ENCODE measurements at regions of chr16 and their contacts with region 1.

Region 1: DNA sequence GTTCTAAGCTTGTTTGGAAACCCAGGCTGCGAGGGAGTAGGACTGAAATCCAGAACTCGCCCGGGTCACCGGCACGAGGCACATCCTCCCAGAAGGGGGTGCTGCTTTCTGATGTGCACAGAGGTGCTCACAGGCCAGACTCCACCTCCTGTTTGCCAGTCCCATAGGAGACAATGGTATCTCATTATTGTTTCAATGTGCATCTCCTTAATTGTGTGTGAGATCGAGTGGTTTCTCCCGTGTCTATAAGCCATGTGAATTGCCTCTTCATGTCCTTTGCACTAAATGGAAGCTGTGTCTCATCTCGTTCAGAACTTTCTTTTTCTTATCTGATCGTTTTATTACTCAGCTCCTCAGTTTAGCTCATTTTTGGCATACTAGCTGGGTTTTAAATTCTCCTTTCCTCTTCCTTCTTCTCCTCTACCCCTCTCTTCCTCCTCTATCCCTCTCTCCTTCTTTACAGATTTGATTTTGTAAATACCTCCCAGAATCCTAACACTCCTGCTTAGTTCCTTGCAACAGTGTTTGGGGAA is 32.1 kb upstream of the PRKCB start:
- DNase-seq: peak; percentile 85
- ATAC-seq: peak; percentile 98
- H3K4me3 Mint-ChIP-seq: no peak overlapping the region
- H3K27ac Mint-ChIP-seq: no peak overlapping the region
- H3K4me1 Mint-ChIP-seq: peaks cover 25% of the 10 kb centered on the region
- H3K27me3 Mint-ChIP-seq: peaks cover 2% of the 10 kb centered on the region

Region 2: DNA sequence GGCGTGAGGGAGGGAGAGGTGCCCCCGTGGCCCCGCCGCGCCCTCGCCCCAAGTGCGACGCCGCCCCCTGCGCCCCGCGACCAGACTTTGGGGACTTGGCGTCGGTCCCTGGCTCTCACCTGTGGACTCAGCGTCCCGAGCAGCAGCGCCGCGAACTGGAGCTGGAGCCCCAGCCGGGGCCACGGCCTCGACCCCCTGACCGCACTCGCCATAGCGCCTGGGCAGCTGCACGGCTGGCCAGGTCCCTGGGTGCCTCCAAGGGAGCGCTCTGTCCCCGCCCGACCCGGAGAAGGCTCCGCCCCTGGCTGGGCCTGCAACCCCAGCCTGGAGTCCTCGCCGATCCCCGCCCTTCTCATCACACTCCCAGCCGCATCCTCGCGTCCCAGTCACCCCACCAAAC is 90.7 kb before region 1 on chr16 and contains the start of gene ERN2:
- CTCF ChIA-PET with region 1: no interaction called
- POLR2A ChIA-PET with region 1: no interaction called
- DNase-seq: no peak
- ATAC-seq: no peak
- H3K4me3 Mint-ChIP-seq: no peak within 1 kb of the TSS
- H3K27ac Mint-ChIP-seq: no peak within 1 kb of the TSS
- H3K4me1 Mint-ChIP-seq: no peaks in the 10 kb centered on the region
- H3K27me3 Mint-ChIP-seq: peaks cover 39% of the 10 kb centered on the region
- total RNA-seq, gene ERN2: not detected

Region 3: GRCh38 chr16:23826528-23827045 is 22.9 kb after region 1 on chr16:
- CTCF ChIA-PET with region 1: interaction called, 56 read pairs
- POLR2A ChIA-PET with region 1: interaction called, 3 read pairs
- DNase-seq: peak; percentile 51
- ATAC-seq: peak; percentile 83
- H3K4me3 Mint-ChIP-seq: peak overlapping the region; percentile 51
- H3K27ac Mint-ChIP-seq: peak overlapping the region; percentile 86
- H3K4me1 Mint-ChIP-seq: peaks cover 30% of the 10 kb centered on the region
- H3K27me3 Mint-ChIP-seq: peaks cover 3% of the 10 kb centered on the region

Region 4: DNA sequence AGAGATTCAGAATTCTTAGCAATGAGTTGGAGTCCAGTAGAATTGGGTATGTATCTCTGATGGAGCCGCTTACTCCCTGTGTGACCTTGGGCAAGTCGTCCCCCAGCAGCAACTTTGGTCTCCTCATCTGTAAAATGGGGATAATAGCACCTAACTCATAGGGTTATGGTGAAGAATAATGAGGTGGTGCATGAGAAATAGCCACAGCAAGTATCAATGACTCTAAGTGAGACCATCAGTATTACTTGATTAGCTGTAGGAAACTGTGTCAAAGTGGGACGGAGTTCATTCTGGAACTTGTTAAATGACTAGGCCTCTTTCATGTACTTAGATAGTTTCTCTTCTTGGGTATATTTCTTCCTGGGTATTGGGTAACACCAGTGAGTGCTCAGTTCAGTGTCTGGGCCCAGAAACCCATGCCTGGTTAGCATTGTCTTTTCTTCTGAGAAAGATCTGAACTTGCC is 38.5 kb after region 1 on chr16:
- CTCF ChIA-PET with region 1: interaction called, 29 read pairs
- POLR2A ChIA-PET with region 1: no interaction called
- DNase-seq: peak; percentile 51
- ATAC-seq: peak; percentile 71
- H3K4me3 Mint-ChIP-seq: peak overlapping the region; percentile 23
- H3K27ac Mint-ChIP-seq: peak overlapping the region; percentile 71
- H3K4me1 Mint-ChIP-seq: peaks cover 77% of the 10 kb centered on the region
- H3K27me3 Mint-ChIP-seq: no peaks in the 10 kb centered on the region

Region 5: GRCh38 chr16:23877107-23878090 is 73.7 kb after region 1 on chr16:
- CTCF ChIA-PET with region 1: interaction called, 32 read pairs
- POLR2A ChIA-PET with region 1: no interaction called
- DNase-seq: no peak
- ATAC-seq: no peak
- H3K4me3 Mint-ChIP-seq: no peak overlapping the region
- H3K27ac Mint-ChIP-seq: no peak overlapping the region
- H3K4me1 Mint-ChIP-seq: peaks cover 78% of the 10 kb centered on the region
- H3K27me3 Mint-ChIP-seq: no peaks in the 10 kb centered on the region

Region 6: GRCh38 chr16:23952128-23952970 is 148.7 kb after region 1 on chr16:
- CTCF ChIA-PET with region 1: interaction called, 12 read pairs
- POLR2A ChIA-PET with region 1: no interaction called
- DNase-seq: peak; percentile 37
- ATAC-seq: no peak
- H3K4me3 Mint-ChIP-seq: peak overlapping the region; percentile 23
- H3K27ac Mint-ChIP-seq: peak overlapping the region; percentile 72
- H3K4me1 Mint-ChIP-seq: peaks cover 71% of the 10 kb centered on the region
- H3K27me3 Mint-ChIP-seq: no peaks in the 10 kb centered on the region

Region 7: DNA sequence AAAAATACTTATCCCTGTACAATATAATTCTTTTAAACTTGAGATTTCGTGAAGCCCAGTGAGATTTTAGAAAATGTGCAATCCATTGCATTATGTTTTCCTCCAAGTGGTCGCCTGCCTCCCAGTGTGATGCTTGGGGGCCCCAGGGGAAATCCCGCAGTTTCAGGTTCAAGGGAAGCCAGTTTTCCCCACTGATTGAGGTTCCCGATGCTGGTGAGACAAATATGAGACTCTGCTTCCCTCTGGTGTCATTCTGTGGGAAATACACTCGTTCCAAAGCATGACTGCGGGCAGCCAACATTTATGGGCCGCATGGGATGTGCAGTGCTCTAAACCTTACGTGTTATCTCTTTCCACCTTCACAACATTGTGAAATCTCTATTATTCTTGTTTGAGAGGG is 233.0 kb after region 1 on chr16:
- CTCF ChIA-PET with region 1: interaction called, 126 read pairs
- POLR2A ChIA-PET with region 1: no interaction called
- DNase-seq: peak; percentile 47
- ATAC-seq: peak; percentile 41
- H3K4me3 Mint-ChIP-seq: peak overlapping the region; percentile 26
- H3K27ac Mint-ChIP-seq: peak overlapping the region; percentile 22
- H3K4me1 Mint-ChIP-seq: peaks cover 56% of the 10 kb centered on the region
- H3K27me3 Mint-ChIP-seq: no peaks in the 10 kb centered on the region

Region 8: DNA sequence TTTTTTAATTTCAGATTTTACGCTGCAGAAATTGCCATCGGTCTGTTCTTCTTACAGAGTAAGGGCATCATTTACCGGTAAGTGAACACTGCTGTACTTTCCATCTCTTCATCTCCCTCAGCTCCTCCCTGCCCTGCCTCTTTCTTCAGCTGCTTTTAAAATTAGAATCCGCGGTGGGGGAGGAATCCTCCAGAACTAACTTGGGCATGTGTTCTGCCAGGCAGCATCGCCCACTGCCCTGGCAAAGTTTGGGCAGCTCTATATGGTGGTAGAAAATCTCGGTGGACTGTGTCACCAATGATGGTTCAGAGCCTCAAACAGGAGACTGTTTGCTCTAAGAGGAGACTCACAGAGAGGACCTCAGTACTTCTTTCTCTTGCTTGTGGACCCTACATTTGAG is 370.8 kb after region 1 on chr16:
- CTCF ChIA-PET with region 1: no interaction called
- POLR2A ChIA-PET with region 1: no interaction called
- DNase-seq: no peak
- ATAC-seq: no peak
- H3K4me3 Mint-ChIP-seq: no peak overlapping the region
- H3K27ac Mint-ChIP-seq: no peak overlapping the region
- H3K4me1 Mint-ChIP-seq: no peaks in the 10 kb centered on the region
- H3K27me3 Mint-ChIP-seq: no peaks in the 10 kb centered on the region

Region 9: GRCh38 chr16:24504472-24505345 is 701.1 kb after region 1 on chr16:
- CTCF ChIA-PET with region 1: interaction called, 17 read pairs
- POLR2A ChIA-PET with region 1: no interaction called
- DNase-seq: peak; percentile 75
- ATAC-seq: peak; percentile 93
- H3K4me3 Mint-ChIP-seq: no peak overlapping the region
- H3K27ac Mint-ChIP-seq: no peak overlapping the region
- H3K4me1 Mint-ChIP-seq: no peaks in the 10 kb centered on the region
- H3K27me3 Mint-ChIP-seq: peaks cover 8% of the 10 kb centered on the region